ENCODE measurements at regions of chr1 and their contacts with region 1.

Region 1: GRCh38 chr1:107840725-107841124 is 124.3 kb downstream of the VAV3 start:
- DNase-seq: no peak
- H3K4me3 ChIP-seq: no peak overlapping the region
- H3K27ac ChIP-seq: no peak overlapping the region
- H3K4me1 ChIP-seq: no peaks in the 10 kb centered on the region
- H3K27me3 ChIP-seq: no peaks in the 10 kb centered on the region
- CTCF ChIP-seq: no peak
- POLR2A ChIP-seq: no peak

Region 2: GRCh38 chr1:107450899-107451664 is 389.6 kb before region 1 on chr1:
- intact Hi-C with region 1: loop called (anchors 5 kb)
- DNase-seq: no peak
- H3K4me3 ChIP-seq: no peak overlapping the region
- H3K27ac ChIP-seq: no peak overlapping the region
- H3K4me1 ChIP-seq: no peaks in the 10 kb centered on the region
- H3K27me3 ChIP-seq: no peaks in the 10 kb centered on the region
- CTCF ChIP-seq: no peak
- POLR2A ChIP-seq: no peak

Region 3: GRCh38 chr1:107710015-107710414 is 130.7 kb before region 1 on chr1:
- intact Hi-C with region 1: no loop called
- DNase-seq: no peak
- H3K4me3 ChIP-seq: no peak overlapping the region
- H3K27ac ChIP-seq: no peak overlapping the region
- H3K4me1 ChIP-seq: no peaks in the 10 kb centered on the region
- H3K27me3 ChIP-seq: no peaks in the 10 kb centered on the region
- CTCF ChIP-seq: no peak
- POLR2A ChIP-seq: no peak